HCT116 (cell line): ENCODE measurements at regions of chr11 and their contacts with region 1.

Region 1: GRCh38 chr11:119338318-119338907 is 2.3 kb downstream of the C1QTNF5 start:
- DNase-seq: peak; percentile 39
- ATAC-seq: peak; percentile 67
- H3K4me3 ChIP-seq: no peak overlapping the region
- H3K27ac ChIP-seq: no peak overlapping the region
- H3K4me1 ChIP-seq: peaks cover 9 to 51% of the 10 kb centered on the region in 2 experiments
- H3K27me3 ChIP-seq: no peaks in the 10 kb centered on the region
- CTCF ChIP-seq: peak; percentile 85 to 88 (median 86)
- POLR2A ChIP-seq: no peak
- RAD21 ChIP-seq: peak; percentile 74

Region 2: DNA sequence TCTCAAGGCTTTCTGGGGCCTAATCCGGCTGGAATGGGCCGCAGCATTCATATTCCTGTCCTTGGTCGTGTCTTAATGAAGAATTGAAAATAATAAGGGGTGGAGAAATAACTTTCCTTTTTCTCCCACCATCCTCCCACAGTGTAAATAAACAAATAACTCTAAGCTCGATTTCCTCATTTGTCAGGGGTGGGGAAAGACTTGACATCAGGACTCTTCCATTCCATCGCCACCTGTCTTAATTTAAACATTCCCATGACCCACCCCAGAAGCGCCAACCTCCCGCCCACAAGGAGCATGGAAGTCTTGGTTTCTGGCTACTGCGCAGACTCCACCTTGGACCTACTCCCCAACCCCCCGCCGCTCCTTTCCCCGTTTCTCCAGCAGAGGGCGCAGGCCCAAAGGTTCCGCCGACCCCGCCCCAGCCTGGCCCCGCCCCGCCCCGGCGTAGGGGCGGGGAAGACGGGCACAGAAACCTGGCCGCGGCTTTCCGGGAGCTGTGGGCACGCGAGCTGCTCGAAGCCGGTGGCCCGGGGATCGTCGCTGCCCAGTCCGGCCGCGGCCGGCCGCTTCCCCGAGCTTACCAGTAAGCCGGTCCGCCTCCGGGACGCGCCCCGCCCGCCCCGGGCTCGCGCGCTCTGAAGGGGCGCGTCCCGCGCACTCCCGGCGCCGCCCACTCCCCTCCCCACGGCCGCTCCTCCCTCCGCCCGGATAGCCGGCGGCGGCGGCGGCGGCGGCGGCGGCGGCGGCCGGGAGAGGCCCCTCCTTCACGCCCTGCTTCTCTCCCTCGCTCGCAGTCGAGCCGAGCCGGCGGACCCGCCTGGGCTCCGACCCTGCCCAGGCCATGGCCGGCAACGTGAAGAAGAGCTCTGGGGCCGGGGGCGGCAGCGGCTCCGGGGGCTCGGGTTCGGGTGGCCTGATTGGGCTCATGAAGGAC is 132.6 kb before region 1 on chr11 and contains the start of gene CBL:
- CTCF ChIA-PET with region 1: interaction called, 17 read pairs
- POLR2A ChIA-PET with region 1: interaction called, 5 read pairs
- RAD21 ChIA-PET with region 1: no interaction called
- intact Hi-C with region 1: no loop called
- DNase-seq: peak; percentile 78
- ATAC-seq: peak; percentile 88
- H3K4me3 ChIP-seq: peak within 1 kb of the TSS; percentile 72 to 96
- H3K27ac ChIP-seq: peak within 1 kb of the TSS; percentile 80
- H3K4me1 ChIP-seq: peaks cover 10 to 16% of the 10 kb centered on the region in 2 experiments
- H3K27me3 ChIP-seq: no peaks in the 10 kb centered on the region
- CTCF ChIP-seq: peak; percentile 69 to 88 (median 85)
- POLR2A ChIP-seq: peak; percentile 21
- RAD21 ChIP-seq: peak; percentile 47
- total RNA-seq, gene CBL: 31.1 TPM

Region 3: GRCh38 chr11:119323538-119324033 is 14.8 kb before region 1 on chr11:
- CTCF ChIA-PET with region 1: interaction called, 44 read pairs
- POLR2A ChIA-PET with region 1: interaction called, 3 read pairs
- RAD21 ChIA-PET with region 1: interaction called in 1 of 2 experiments, 4 read pairs
- intact Hi-C with region 1: no loop called
- DNase-seq: peak; percentile 51
- ATAC-seq: peak; percentile 71
- H3K4me3 ChIP-seq: no peak overlapping the region
- H3K27ac ChIP-seq: no peak overlapping the region
- H3K4me1 ChIP-seq: peaks cover 0 to 10% of the 10 kb centered on the region in 2 experiments; a peak in 1 of 4 replicates
- H3K27me3 ChIP-seq: no peaks in the 10 kb centered on the region
- CTCF ChIP-seq: peak; percentile 76 to 90 (median 85)
- POLR2A ChIP-seq: no peak
- RAD21 ChIP-seq: peak; percentile 84

Region 4: GRCh38 chr11:119373921-119374631 is 35.7 kb after region 1 on chr11:
- CTCF ChIA-PET with region 1: interaction called, 14 read pairs
- POLR2A ChIA-PET with region 1: interaction called, 4 read pairs
- RAD21 ChIA-PET with region 1: no interaction called
- intact Hi-C with region 1: no loop called
- DNase-seq: no peak
- ATAC-seq: peak; percentile 80
- H3K4me3 ChIP-seq: no peak overlapping the region
- H3K27ac ChIP-seq: no peak overlapping the region
- H3K4me1 ChIP-seq: peaks cover 19 to 39% of the 10 kb centered on the region in 2 experiments
- H3K27me3 ChIP-seq: no peaks in the 10 kb centered on the region
- CTCF ChIP-seq: peak; percentile 94 to 96 (median 95)
- POLR2A ChIP-seq: no peak
- RAD21 ChIP-seq: peak; percentile 96

Region 5: DNA sequence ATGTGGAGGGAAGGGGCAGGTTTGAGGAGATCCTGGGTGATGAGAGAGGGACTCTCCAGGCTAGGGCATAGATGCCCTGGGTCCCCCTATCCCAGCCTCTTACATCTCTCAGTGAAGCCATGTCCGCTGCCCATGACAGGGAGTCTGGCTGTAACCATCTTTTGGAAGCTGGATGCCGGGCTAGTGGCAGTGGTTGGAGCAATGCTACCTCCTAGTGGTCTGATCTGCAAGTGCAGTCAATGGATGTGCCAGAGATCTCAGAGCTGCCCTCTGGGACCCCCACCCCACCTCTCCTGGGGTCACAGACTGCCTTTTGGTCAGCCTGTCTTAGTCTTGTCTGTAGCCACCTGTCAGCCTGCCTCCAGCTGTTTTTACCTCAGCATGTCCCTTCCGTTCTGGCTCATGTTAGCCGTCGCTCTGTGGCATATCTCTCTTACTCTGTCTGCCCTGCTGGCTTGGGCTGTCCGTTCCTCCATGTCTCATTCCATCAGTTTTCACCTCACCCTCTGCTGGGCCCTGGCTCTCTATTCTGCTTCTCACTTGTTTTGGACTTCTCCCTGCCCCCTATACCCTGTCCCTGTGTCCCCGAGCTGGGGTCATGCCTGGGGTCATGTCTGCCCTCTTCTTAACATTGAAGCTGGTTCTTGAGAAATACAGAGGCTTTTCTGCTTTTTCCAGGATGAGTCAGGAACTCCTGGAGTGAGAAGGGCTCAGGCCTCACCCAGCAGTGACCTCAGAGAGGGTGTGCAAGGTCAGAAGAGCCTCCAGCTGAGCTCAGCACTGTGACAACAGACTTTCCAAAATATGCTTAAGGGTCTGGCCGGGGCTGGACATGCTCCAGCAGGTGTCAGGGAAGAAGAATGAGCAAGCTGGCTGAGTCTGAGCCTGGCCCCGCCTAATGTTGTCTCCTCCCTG is 136.5 kb after region 1 on chr11:
- CTCF ChIA-PET with region 1: interaction called, 27 read pairs
- POLR2A ChIA-PET with region 1: no interaction called
- RAD21 ChIA-PET with region 1: interaction called in 1 of 2 experiments, 4 read pairs
- intact Hi-C with region 1: no loop called
- DNase-seq: no peak
- ATAC-seq: peak; percentile 78
- H3K4me3 ChIP-seq: no peak overlapping the region
- H3K27ac ChIP-seq: no peak overlapping the region
- H3K4me1 ChIP-seq: peaks cover 0 to 25% of the 10 kb centered on the region in 2 experiments; a peak in 1 of 4 replicates
- H3K27me3 ChIP-seq: no peaks in the 10 kb centered on the region
- CTCF ChIP-seq: peak; percentile 80 to 91 (median 88)
- POLR2A ChIP-seq: no peak
- RAD21 ChIP-seq: peak; percentile 90

Region 6: DNA sequence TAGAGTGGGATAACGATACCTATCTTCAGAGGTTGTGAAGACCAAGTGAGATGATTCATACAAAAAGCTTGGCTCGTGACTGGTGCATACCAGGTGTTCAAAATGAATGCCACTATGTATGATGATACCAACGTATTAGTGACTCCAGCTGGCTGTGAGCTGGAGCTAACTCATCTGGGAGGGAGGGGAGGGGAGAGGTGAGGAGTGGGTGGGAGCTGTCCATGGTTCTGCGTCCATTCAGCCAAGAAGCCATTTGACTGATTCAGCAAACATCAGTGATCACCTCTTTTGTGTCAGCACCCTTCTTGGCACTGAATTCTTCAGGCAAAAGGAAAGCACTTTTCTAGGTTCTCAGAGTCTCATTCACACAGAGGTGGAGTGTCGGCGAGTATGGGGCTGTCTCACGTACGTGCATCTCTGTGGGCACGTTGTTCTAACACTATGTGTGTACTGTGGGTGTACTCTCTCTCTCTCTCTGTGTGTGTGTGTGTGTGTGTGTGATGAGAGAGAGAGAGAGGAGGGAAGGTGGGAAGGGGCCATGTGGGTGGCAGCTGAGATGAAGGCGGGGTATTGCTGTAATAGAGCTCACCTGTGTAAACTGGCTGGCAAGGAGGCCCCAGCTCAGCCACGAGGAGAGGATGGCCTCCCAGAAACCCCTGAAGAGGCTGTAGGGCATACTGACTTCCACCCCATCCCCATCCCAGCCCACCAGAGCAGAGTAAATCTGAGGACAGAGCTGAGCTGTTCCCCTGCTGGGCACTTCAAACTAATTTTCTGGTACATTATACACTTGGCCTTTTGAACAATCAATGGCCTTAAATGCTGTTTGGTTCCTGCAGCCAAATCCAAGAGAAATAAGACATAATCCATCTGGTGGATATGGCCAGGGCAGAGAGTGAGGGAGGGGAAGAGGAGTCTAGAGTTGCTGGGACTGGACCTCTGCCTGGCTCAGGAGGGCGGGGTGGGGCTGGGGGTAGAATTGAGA is 180.6 kb after region 1 on chr11:
- CTCF ChIA-PET with region 1: no interaction called
- POLR2A ChIA-PET with region 1: no interaction called
- RAD21 ChIA-PET with region 1: no interaction called
- intact Hi-C with region 1: no loop called
- DNase-seq: no peak
- ATAC-seq: no peak; the same call in 1 of the 2 replicates
- H3K4me3 ChIP-seq: no peak overlapping the region
- H3K27ac ChIP-seq: no peak overlapping the region
- H3K4me1 ChIP-seq: no peaks in the 10 kb centered on the region
- H3K27me3 ChIP-seq: no peaks in the 10 kb centered on the region
- CTCF ChIP-seq: no peak
- POLR2A ChIP-seq: no peak
- RAD21 ChIP-seq: no peak

Region 7: DNA sequence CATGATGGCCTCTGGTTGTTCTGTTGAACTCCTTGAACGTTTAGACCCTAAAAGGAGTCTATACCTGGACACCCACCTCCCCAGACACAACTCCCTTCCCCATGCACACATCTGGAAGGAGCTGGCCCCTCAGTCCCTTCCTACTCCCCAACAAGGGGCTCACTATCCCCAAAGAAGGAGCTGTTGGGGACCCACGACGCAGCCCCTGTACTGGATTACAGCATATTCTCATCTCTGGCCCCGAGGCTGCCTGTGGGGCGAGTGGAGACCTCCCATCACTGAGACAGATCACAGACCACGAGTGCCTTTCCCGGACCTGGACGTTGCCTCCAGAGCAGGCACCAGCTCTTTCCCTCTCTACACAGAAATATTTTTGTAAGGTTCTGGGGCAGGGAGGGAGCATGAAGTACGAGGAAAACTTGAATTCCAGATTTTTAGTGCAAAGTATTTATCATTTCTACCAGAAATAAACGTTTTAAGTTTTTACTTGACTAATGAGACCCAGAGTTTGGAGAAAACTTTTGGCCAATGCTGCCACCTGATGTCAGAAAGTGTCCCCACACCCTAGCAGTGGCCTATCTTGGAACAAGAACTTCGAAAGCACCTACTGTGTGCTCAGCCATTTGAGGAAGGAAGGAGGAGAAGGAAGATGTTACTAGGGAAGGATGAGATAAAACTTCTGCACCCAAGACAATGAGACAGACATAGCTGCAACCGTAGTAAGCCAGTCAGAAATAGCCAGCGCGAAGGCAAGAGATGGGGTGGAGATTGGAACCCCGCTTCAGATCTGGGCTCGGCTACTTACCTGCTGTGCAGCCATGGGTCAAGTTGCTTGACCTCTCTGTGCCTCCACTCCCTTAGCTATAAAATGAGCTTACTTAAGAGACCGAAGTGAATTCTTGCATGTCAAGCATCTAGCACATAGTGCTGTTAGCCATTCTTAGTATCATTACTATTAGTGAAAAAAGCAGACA is 891.3 kb after region 1 on chr11:
- CTCF ChIA-PET with region 1: no interaction called
- POLR2A ChIA-PET with region 1: no interaction called
- RAD21 ChIA-PET with region 1: no interaction called
- intact Hi-C with region 1: no loop called
- DNase-seq: no peak
- ATAC-seq: peak; percentile 59; the same call in 1 of the 2 replicates
- H3K4me3 ChIP-seq: no peak overlapping the region
- H3K27ac ChIP-seq: no peak overlapping the region
- H3K4me1 ChIP-seq: no peaks in the 10 kb centered on the region
- H3K27me3 ChIP-seq: no peaks in the 10 kb centered on the region; the same call in 1 of the 2 replicates
- CTCF ChIP-seq: peak; percentile 68 to 78 (median 72)
- POLR2A ChIP-seq: no peak
- RAD21 ChIP-seq: peak; percentile 85